ENCODE measurements at regions of chr4 and their contacts with region 1.

Region 1: DNA sequence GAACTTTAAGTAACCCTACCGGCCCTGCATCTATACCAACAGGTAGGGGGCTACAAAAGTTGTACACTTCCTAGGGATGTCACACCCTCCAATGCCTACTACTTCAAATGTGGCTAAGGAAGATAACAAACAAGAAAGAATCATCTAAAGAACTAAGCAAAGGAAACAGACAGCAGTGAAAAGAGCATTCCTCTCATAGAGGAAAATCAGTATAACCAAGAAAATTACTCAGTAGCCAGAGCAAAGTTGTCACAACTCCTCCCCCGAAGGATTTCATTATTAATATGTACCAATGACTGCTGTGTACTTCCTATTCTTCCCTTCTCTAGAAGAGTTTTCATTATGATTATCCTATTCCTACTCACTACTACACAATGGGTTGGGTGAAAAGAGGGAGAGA is 12.6 kb downstream of the ANKRD17 start:
- DNase-seq: no peak
- H3K4me3 ChIP-seq: no peak overlapping the region
- H3K27ac ChIP-seq: no peak overlapping the region
- H3K4me1 ChIP-seq: no peaks in the 10 kb centered on the region
- H3K27me3 ChIP-seq: no peaks in the 10 kb centered on the region
- CTCF ChIP-seq: no peak
- POLR2A ChIP-seq: no peak

Region 2: DNA sequence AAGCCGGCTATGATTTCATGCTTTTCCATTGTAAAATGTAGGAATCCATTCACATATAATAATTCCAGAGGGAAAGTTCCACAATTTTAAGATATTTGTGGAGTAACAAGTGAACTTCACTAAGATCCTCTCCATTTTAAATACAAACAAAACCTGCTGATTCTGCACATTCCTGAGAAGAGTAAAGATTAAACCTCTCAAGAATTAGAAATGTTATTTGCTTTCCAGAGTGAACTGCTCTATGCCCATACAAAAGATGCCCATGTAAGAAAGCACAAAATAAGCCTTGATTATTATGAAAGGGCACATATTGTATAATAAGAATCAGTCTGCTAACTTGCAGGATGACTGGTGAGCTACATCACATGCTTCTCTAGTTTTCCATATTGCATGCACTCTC is 418.0 kb before region 1 on chr4:
- intact Hi-C with region 1: loop called (anchors 10 kb)
- DNase-seq: no peak
- H3K4me3 ChIP-seq: no peak overlapping the region
- H3K27ac ChIP-seq: no peak overlapping the region
- H3K4me1 ChIP-seq: no peaks in the 10 kb centered on the region
- H3K27me3 ChIP-seq: no peaks in the 10 kb centered on the region
- CTCF ChIP-seq: no peak
- POLR2A ChIP-seq: no peak

Measured in breast epithelium (tissue), 4 donors.